Right cardiac atrium (tissue), 5 donors: ENCODE measurements at regions of chr1 and their contacts with region 1.

Region 1: GRCh38 chr1:37434292-37434907 is 40.0 kb upstream of the ZC3H12A start:
- DNase-seq: peak; percentile 66 to 88 (median 85)
- ATAC-seq: peak; percentile 67 to 80
- H3K4me3 ChIP-seq: no peak overlapping the region
- H3K27ac ChIP-seq: no peak overlapping the region
- H3K4me1 ChIP-seq: no peaks in the 10 kb centered on the region
- H3K27me3 ChIP-seq: no peaks in the 10 kb centered on the region

Region 2: DNA sequence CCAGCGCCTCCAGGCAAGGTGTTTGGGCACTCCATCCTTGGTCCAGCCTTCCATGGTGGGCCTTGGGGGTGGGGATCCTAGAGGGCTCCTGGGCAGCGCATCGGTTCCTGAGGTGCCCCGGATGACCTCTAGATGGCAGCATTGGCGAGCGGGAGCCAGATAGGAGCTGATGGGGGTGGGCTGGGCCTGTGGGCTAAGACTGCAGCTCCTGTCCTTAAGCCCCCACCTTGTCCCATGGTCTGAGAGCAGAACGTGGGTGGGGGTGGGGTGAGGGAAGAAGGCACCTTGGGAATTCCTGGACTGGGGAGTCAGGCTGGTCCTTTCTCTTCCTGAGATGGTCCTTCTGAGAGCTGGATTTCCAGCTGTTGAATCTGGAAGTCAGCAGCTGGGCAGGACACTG is 858.3 kb before region 1 on chr1:
- intact Hi-C with region 1: loop called (anchors 5 to 10 kb)
- DNase-seq: peak; percentile 41 to 77 (median 74)
- ATAC-seq: peak; percentile 72 to 79
- H3K4me3 ChIP-seq: no peak overlapping the region
- H3K27ac ChIP-seq: no peak overlapping the region
- H3K4me1 ChIP-seq: peaks cover 2% of the 10 kb centered on the region
- H3K27me3 ChIP-seq: no peaks in the 10 kb centered on the region

Region 3: GRCh38 chr1:36703526-36704208 is 730.7 kb before region 1 on chr1:
- intact Hi-C with region 1: loop called (anchors 5 kb)
- DNase-seq: peak; percentile 74 to 88 (median 88)
- ATAC-seq: peak; percentile 82 to 90
- H3K4me3 ChIP-seq: no peak overlapping the region
- H3K27ac ChIP-seq: no peak overlapping the region
- H3K4me1 ChIP-seq: no peaks in the 10 kb centered on the region
- H3K27me3 ChIP-seq: no peaks in the 10 kb centered on the region

Region 4: GRCh38 chr1:37391211-37392011 is 43.0 kb before region 1 on chr1:
- intact Hi-C with region 1: no loop called
- DNase-seq: no peak
- ATAC-seq: no peak
- H3K4me3 ChIP-seq: no peak overlapping the region
- H3K27ac ChIP-seq: no peak overlapping the region
- H3K4me1 ChIP-seq: no peaks in the 10 kb centered on the region
- H3K27me3 ChIP-seq: no peaks in the 10 kb centered on the region

Region 5: DNA sequence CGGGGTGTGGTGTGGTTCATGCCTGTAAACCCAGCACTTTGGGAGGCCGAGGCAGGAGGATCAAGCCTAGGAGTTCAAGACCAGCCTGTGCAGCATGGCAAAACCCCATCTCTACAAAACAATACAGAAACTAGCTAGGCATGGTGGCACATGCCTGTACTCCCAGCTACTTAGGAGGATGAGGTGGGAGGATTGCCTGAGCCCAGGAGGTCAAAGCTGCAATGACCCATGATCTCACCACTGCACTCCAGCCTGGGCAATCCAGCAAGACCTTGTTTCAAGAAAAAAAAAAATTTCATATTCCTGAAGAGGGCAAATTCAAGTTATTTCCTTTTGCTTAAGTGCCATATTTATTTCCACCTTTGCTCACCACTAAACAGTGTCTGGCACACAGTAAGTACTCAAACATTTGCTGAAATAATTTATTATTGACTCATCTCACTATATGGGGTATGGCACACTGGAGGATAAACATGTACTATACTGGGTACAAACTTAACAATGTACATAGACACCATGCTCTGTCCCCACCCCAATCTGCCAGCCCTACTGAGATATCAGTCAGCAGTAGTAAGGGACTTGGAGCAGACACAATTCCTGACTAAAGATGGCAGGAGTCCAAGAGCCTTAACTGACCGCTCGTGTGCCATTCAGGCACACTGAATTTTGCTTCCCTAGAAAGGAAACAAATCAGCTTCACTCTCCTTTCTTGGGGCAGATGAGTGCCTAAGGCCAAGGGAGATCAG is 64.6 kb after region 1 on chr1:
- intact Hi-C with region 1: no loop called
- DNase-seq: peak in 1 of 3 donors; percentile 57
- ATAC-seq: peak; percentile 90 to 91
- H3K4me3 ChIP-seq: no peak overlapping the region
- H3K27ac ChIP-seq: no peak overlapping the region
- H3K4me1 ChIP-seq: peaks cover 1% of the 10 kb centered on the region
- H3K27me3 ChIP-seq: no peaks in the 10 kb centered on the region